ENCODE measurements at regions of chr1 and their contacts with region 1.

Region 1: DNA sequence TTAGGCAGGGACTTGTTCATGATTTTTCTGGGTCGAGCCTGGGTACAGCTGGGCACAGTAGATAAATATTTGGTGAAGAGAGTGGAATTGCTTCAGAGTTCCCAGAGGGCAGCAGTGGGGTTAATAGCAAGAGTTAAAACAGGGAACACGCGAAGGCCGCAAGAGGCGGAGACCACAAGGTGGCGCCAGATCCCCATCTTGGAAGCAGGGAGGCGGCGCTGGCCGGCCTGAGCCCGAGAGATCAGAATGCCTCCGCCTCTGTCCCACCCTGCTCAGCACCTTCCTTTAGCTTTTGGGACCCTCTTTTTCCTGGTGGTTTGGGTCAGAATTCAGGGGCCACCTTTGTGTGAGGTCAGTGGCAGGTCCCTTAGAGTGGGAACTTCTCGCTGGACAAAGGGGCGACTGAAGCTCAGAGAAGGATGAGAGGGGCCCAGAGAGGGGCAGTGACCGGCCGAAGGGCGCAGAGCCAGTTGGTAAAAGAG is 6.5 kb upstream of the PADI2 start:
- DNase-seq: peak; percentile 36 to 90
- H3K4me3 ChIP-seq: no peak overlapping the region
- H3K27ac ChIP-seq: no peak overlapping the region
- H3K4me1 ChIP-seq: peaks cover 0 to 23% of the 10 kb centered on the region in 2 donors
- H3K27me3 ChIP-seq: no peaks in the 10 kb centered on the region
- CTCF ChIP-seq: peak; percentile 92 to 94 (median 93)

Region 2: GRCh38 chr1:17059739-17060460 is 65.9 kb before region 1 on chr1:
- intact Hi-C with region 1: loop called (anchors 5 kb)
- DNase-seq: no peak
- H3K4me3 ChIP-seq: no peak overlapping the region
- H3K27ac ChIP-seq: no peak overlapping the region
- H3K4me1 ChIP-seq: no peaks in the 10 kb centered on the region
- H3K27me3 ChIP-seq: no peaks in the 10 kb centered on the region
- CTCF ChIP-seq: peak; percentile 22 to 40 (median 37)

Region 3: GRCh38 chr1:17141441-17142197 is 15.8 kb after region 1 on chr1:
- intact Hi-C with region 1: no loop called
- DNase-seq: no peak
- H3K4me3 ChIP-seq: no peak overlapping the region
- H3K27ac ChIP-seq: no peak overlapping the region
- H3K4me1 ChIP-seq: no peaks in the 10 kb centered on the region
- H3K27me3 ChIP-seq: no peaks in the 10 kb centered on the region
- CTCF ChIP-seq: no peak

Region 4: DNA sequence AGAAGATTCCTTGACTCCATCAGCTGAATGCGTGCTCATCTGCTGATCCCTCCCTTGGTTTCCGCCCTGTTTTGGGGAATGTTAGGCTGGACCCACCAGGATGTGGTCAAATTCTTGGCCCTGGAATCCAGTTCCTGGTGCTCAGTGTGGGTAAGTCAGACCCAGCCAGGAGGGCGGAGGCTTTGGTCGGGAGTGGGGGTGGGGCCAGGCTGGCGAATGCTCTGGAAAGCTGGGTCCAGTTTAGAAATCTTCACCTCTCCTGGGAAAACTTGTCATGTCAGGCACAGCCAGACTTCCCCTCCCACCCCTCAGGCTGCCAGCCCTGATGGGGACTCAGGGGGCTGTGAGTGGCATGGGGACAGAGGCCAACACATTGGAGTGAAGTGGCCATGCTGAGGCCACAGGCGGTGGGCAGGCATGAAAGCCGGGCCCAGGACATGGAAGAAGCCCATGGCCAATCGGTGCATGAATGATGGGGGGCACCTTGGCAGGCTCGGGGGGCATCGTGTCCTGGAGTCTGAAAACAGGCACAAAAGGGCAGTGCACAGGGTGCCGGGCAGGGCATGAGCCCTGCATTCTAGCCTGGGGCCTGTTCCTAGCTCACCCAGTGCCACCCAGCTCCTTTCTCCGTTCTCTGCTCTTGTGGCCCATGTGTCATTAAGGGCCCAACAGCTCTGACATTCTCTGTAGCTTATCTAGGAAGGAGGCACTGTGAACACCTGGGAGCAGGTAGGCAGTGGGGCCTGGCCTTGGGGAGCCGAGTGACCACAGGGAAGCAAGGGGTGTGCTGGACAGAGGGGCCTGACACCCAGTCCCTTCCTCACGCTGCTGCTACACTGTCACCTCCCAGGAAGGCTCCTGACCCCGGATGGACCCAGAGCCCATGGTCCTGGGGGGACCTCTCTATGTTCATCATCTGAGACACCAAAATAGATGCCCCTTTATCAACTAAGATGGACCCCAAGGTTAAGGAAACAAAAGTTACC is 64.5 kb after region 1 on chr1:
- intact Hi-C with region 1: no loop called
- DNase-seq: no peak
- H3K4me3 ChIP-seq: no peak overlapping the region
- H3K27ac ChIP-seq: no peak overlapping the region
- H3K4me1 ChIP-seq: no peaks in the 10 kb centered on the region
- H3K27me3 ChIP-seq: no peaks in the 10 kb centered on the region
- CTCF ChIP-seq: no peak

Region 5: DNA sequence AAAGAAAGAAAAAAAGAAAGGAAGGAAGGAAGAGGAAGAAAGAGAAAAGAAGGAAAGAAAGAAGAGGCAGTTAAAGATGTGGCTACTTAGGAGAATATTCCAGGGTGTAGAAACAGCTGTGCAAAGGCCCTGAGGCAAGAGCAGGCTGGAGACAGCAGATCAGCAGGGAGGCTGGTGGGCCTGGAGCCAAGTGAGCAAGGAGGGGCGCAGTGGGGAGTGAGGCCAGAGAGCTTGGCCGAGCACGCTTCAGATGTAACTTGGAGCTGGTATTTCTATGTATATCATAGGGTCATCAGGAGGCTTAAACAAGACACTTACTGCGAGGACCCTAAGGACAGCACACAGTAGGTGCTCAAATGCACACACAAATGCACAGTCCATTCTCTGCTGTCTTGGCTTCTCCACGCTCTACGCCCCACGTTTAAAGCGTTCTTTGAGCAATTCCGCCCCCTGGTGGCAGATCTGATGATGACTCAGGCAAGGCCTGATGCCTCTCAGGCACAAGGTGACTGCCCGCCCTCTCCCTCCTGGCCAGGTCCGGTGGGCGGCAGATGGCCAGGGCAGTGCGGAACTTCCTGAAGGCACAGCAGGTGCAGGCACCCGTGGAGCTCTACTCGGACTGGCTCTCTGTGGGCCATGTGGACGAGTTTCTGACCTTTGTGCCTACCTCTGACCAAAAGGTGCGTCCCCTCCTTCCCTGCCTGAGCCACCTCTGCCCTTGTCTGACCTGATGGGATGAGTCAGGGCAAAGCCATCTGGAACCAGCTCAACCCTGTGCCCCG is 111.2 kb after region 1 on chr1:
- intact Hi-C with region 1: loop called (anchors 1 kb)
- DNase-seq: peak; percentile 11 to 90
- H3K4me3 ChIP-seq: no peak overlapping the region
- H3K27ac ChIP-seq: no peak overlapping the region
- H3K4me1 ChIP-seq: peaks cover 0 to 4% of the 10 kb centered on the region in 2 donors
- H3K27me3 ChIP-seq: no peaks in the 10 kb centered on the region
- CTCF ChIP-seq: peak; percentile 81 to 89 (median 88)

Region 6: DNA sequence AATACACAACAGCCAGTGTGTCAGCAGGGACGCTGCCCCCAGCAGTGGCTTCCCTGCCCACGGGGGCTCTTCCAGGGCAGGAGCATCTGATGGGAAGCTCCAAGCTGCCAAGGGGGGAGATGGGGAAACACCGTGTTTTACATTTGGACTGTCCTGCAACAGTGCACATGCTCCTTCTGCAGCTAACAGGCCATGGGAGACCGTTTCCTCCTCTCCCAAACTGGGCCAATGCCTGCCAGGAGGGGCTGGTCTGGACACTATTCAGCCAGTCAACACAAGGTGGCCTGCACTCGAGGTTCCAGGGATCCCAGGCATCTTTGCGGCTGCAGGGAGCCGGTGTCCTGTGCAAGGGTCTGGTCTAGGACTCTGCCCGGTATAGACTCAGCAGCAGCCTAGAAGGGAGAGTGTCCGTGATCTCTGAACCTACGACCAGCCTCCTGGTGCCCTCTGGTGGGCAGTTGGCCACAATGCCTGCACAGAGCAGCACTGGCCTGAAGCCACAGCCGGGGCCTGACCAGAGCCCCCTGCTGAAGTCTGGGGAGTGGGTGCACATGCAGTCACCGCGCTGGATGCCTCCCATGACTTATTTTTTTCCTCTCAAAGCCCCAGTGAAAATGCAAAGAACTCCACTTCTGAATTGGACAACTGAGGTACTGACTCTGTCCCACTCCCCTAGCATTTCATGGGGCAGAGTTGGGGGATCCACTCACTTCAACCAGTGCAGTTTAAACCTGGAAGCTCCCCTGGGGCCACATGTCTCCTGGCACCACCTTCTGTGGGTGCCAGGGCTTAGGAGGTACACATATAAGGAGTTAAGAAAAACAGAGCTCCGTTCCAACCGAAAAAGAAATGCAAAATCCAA is 280.3 kb after region 1 on chr1:
- intact Hi-C with region 1: loop called (anchors 2 kb)
- DNase-seq: no peak
- H3K4me3 ChIP-seq: no peak overlapping the region
- H3K27ac ChIP-seq: no peak overlapping the region
- H3K4me1 ChIP-seq: no peaks in the 10 kb centered on the region
- H3K27me3 ChIP-seq: no peaks in the 10 kb centered on the region
- CTCF ChIP-seq: peak; percentile 29 to 69 (median 54)